H1 (cell line): ENCODE measurements at regions of chr9 and their contacts with region 1.

Region 1: DNA sequence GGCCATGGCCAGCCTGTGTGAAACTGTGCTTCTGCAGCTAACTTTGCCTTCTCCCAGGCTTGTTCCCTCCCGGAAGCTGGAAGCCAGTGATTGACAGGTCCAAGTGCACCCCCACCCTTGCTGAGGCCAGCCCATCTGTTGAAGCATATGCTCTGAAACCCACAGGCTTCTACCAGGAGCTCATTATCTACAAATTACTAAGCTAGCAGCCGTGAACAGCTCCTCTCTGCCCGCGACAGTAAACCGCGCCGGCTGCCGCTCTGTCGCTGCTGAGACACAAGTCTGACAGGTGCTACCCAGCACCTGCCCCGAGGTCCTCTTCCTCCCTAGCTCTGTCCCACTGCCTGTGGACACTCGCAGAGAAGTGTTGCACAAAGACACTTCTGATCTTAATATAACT is 490.9 kb downstream of the GADD45G start:
- DNase-seq: no peak
- H3K4me3 ChIP-seq: no peak overlapping the region
- H3K27ac ChIP-seq: no peak overlapping the region
- H3K4me1 ChIP-seq: peaks cover 0 to 3% (median 0%) of the 10 kb centered on the region in 4 experiments; a peak in 1 of 7 replicates
- H3K27me3 ChIP-seq: no peaks in the 10 kb centered on the region; a peak in 1 of 7 replicates
- CTCF ChIP-seq: no peak
- EP300 ChIP-seq: no peak
- POLR2A ChIP-seq: no peak
- RAD21 ChIP-seq: no peak

Region 2: DNA sequence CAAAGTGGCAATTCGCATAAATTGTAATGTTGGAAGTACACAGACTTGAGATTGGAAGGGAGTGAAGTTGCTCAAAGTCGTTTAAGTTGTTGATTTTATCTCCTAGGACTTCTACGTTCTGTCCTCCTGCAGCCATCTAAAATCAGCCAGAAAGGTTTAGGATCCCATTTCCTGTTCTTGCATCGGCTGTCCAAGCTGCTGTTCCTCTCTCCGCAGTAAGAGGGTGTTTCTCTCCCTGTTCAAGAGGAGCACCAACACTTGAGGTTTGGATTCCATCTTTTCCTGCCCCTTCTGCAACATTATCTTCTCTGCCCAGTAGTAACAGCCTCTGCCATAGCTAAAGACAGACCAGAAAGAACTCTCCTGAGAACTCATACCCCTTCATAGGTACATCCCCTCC is 117.5 kb before region 1 on chr9:
- CTCF ChIA-PET with region 1: interaction called, 26 read pairs
- POLR2A ChIA-PET with region 1: no interaction called
- DNase-seq: no peak
- H3K4me3 ChIP-seq: no peak overlapping the region
- H3K27ac ChIP-seq: no peak overlapping the region
- H3K4me1 ChIP-seq: no peaks in the 10 kb centered on the region
- H3K27me3 ChIP-seq: no peaks in the 10 kb centered on the region
- CTCF ChIP-seq: peak; percentile 20 to 61 (median 39); a peak in 3 of 4 replicates
- EP300 ChIP-seq: no peak
- POLR2A ChIP-seq: no peak
- RAD21 ChIP-seq: peak; percentile 38 to 52; a peak in 3 of 4 replicates

Region 3: DNA sequence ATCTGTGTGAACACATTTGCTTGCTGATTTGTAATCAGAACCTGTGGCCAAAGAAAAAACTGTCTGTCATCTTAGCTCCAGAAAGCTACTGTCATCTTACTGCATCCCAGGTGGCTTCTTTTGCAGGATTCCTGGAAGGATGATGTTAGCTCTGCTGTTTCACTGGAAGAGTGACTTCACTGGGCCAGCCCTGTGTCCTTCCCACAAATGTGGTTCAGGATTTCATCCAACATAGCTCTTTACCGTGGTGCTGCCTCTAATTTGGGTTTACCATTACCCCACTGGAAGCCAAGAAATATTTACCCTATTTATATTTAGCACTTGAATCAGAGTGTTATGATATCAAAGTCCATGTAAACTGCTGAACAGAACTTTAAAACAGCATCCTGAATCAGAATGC is 10.1 kb after region 1 on chr9:
- CTCF ChIA-PET with region 1: no interaction called
- POLR2A ChIA-PET with region 1: no interaction called
- DNase-seq: no peak
- H3K4me3 ChIP-seq: no peak overlapping the region
- H3K27ac ChIP-seq: no peak overlapping the region
- H3K4me1 ChIP-seq: no peaks in the 10 kb centered on the region
- H3K27me3 ChIP-seq: no peaks in the 10 kb centered on the region; a peak in 1 of 7 replicates
- CTCF ChIP-seq: no peak
- EP300 ChIP-seq: no peak
- POLR2A ChIP-seq: no peak
- RAD21 ChIP-seq: no peak

Region 4: DNA sequence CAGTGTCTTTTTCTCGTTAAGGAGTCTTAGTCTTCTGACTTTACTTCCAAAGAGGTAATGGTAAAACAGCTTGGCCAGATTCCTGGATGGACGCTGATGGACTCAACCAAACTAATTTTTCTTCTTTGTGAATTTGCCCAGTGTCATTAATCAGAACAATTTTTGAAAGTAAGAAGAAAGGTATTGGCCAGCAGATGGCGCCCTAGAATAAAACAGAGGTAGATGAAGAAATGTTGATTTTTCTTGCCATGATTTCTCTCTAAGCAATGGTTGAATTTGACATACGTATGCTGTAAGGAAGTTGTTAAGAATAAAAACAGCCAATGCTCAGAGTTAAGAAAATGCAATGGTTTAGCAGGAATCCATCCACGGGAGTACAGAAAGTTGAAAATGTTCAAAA is 46.9 kb after region 1 on chr9:
- CTCF ChIA-PET with region 1: no interaction called
- POLR2A ChIA-PET with region 1: no interaction called
- DNase-seq: peak in 1 of 2 experiments; percentile 71
- H3K4me3 ChIP-seq: no peak overlapping the region
- H3K27ac ChIP-seq: no peak overlapping the region
- H3K4me1 ChIP-seq: no peaks in the 10 kb centered on the region; a peak in 1 of 7 replicates
- H3K27me3 ChIP-seq: no peaks in the 10 kb centered on the region
- CTCF ChIP-seq: peak in 2 of 3 experiments; percentile 31 to 40; a peak in 2 of 4 replicates
- EP300 ChIP-seq: no peak
- POLR2A ChIP-seq: no peak
- RAD21 ChIP-seq: peak; percentile 59 to 63